H1 (cell line): ENCODE measurements at regions of chr3 and their contacts with region 1.

Region 1: DNA sequence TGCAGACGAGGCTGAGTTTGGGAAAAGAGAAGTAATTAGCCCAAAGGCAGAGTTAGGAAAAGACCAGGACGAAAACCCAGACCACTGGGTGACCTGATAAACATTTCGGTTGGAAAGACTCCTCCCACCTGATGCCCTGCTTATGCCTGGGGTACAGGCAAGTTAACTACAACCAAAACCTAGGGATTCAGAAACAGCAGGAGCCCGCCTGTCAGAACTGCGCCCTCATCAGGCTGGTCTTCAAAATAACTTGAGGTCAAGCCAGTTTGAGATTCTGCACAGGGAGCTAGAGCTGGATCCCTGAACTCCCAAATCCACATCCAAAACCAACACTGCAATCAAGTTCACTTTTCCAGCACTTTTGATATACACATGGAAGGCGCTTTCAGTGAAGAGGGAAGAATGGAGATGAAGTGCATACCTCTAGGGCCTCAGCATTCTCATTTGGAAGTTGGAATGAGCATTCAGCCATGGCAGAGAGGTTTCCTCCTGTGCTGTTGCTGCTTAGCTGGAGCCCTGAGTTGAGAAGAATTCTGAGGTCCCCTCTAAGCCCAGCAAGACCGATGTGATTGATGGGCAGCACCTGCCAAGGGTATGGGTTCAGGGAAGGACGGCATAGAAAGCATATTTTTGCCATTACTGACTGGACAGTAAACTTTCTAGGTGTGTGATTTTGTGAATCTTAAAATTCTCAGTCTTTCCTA is 11.6 kb downstream of the TSEN2 start:
- DNase-seq: no peak
- H3K4me3 ChIP-seq: no peak overlapping the region
- H3K27ac ChIP-seq: no peak overlapping the region
- H3K4me1 ChIP-seq: no peaks in the 10 kb centered on the region
- H3K27me3 ChIP-seq: no peaks in the 10 kb centered on the region
- CTCF ChIP-seq: peak; percentile 44 to 69 (median 61)
- EP300 ChIP-seq: no peak
- POLR2A ChIP-seq: no peak
- RAD21 ChIP-seq: peak; percentile 19 to 37; a peak in 2 of 4 replicates

Region 2: DNA sequence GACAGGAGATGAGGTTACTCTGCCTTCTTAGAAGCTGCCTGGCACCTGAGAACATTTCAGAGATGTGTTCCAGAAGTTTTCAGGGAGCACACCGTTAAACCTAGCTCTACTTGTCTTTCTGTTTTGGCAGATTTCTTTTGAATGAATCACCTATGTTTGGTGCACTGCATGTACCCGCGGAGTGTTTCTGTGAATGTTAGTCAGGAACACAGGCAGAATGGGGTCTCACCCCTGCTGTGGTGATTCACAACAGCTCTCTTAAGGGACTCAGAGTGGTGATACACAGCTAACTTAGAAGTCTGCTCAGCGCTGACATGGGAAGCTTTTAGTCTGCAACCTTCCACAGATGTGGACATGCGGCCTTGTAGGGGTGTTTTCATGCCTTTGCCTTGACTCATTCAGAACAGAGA is 12.4 kb after region 1 on chr3:
- CTCF ChIA-PET with region 1: interaction called, 32 read pairs
- POLR2A ChIA-PET with region 1: interaction called, 9 read pairs
- DNase-seq: no peak
- H3K4me3 ChIP-seq: no peak overlapping the region
- H3K27ac ChIP-seq: no peak overlapping the region
- H3K4me1 ChIP-seq: no peaks in the 10 kb centered on the region
- H3K27me3 ChIP-seq: no peaks in the 10 kb centered on the region
- CTCF ChIP-seq: no peak
- EP300 ChIP-seq: no peak
- POLR2A ChIP-seq: no peak
- RAD21 ChIP-seq: no peak